ENCODE measurements at regions of chr6 and their contacts with region 1.

Region 1: GRCh38 chr6:32118782-32119628 is 9.0 kb downstream of the ATF6B start:
- DNase-seq: peak; percentile 84
- H3K4me3 ChIP-seq: no peak overlapping the region
- H3K27ac ChIP-seq: peak overlapping the region; percentile 47 to 52
- H3K4me1 ChIP-seq: no peaks in the 10 kb centered on the region
- H3K27me3 ChIP-seq: no peaks in the 10 kb centered on the region
- CTCF ChIP-seq: peak; percentile 63 to 96 (median 92)
- POLR2A ChIP-seq: no peak

Region 2: GRCh38 chr6:31615748-31616147 is 503.3 kb before region 1 on chr6:
- intact Hi-C with region 1: no loop called
- DNase-seq: no peak
- H3K4me3 ChIP-seq: no peak overlapping the region
- H3K27ac ChIP-seq: no peak overlapping the region
- H3K4me1 ChIP-seq: no peaks in the 10 kb centered on the region
- H3K27me3 ChIP-seq: no peaks in the 10 kb centered on the region
- CTCF ChIP-seq: no peak
- POLR2A ChIP-seq: no peak

Region 3: DNA sequence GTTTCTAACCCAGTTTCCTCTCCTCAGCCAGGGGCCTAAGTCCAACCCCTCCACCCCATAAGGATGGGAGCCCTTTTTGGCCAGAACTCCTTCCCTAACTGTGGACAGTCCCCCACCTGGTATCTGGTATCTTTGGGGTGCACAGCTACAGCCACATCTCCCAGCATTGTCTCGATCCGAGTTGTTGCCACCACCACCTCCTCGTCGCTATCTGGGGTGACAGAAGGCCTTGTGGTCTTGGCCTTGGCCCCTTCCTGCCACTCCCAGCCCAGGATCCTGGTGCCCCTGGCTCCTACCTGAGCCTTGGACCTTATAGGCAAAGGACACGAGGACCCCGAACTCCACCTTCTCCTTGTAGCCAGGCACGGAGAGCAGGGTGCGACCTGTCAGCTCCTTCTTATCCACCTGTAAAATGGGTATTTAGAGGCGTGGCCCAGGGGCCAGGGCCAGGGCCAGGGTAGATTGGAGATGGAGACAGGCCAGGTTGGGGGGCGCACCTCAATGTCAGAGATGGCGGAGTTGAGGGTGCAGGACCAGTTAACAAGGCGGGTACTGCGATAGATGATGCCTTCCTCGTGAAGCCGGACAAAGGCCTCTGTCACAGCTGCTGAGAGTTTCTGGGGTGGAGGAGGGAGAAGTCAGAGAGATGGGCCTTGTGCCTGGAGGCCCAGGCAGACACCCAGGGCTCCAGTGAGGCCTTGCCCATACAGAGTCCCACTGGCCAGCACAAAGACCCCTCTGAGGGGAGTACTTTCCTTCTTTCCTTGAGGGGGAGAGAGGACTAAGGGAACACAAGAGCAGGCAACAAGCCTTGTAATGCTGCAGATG is 334.7 kb before region 1 on chr6:
- intact Hi-C with region 1: no loop called
- DNase-seq: no peak
- H3K4me3 ChIP-seq: no peak overlapping the region
- H3K27ac ChIP-seq: no peak overlapping the region
- H3K4me1 ChIP-seq: no peaks in the 10 kb centered on the region
- H3K27me3 ChIP-seq: no peaks in the 10 kb centered on the region
- CTCF ChIP-seq: no peak
- POLR2A ChIP-seq: no peak

Region 4: DNA sequence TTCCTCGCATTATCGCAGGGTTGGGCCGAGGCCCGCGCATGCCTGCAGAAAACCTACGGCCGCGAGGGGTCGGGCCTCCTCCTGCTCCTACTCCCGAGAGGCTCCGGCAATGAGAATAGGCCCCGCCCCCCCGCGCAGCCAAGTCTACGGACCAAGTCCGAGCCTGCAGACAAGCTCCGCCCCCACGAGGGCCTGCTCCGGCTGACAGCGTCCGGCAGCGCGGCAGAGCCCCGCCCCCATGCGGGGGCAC is 76.6 kb after region 1 on chr6:
- intact Hi-C with region 1: loop called (anchors 2 kb)
- DNase-seq: peak; percentile 100
- H3K4me3 ChIP-seq: peak overlapping the region; percentile 57 to 63
- H3K27ac ChIP-seq: peak overlapping the region; percentile 99
- H3K4me1 ChIP-seq: no peaks in the 10 kb centered on the region
- H3K27me3 ChIP-seq: no peaks in the 10 kb centered on the region
- CTCF ChIP-seq: peak; percentile 44 to 95 (median 70)
- POLR2A ChIP-seq: no peak

Region 5: GRCh38 chr6:32212076-32212760 is 93.2 kb after region 1 on chr6:
- intact Hi-C with region 1: no loop called
- DNase-seq: no peak
- H3K4me3 ChIP-seq: no peak overlapping the region
- H3K27ac ChIP-seq: no peak overlapping the region
- H3K4me1 ChIP-seq: no peaks in the 10 kb centered on the region
- H3K27me3 ChIP-seq: no peaks in the 10 kb centered on the region
- CTCF ChIP-seq: no peak
- POLR2A ChIP-seq: no peak

Region 6: DNA sequence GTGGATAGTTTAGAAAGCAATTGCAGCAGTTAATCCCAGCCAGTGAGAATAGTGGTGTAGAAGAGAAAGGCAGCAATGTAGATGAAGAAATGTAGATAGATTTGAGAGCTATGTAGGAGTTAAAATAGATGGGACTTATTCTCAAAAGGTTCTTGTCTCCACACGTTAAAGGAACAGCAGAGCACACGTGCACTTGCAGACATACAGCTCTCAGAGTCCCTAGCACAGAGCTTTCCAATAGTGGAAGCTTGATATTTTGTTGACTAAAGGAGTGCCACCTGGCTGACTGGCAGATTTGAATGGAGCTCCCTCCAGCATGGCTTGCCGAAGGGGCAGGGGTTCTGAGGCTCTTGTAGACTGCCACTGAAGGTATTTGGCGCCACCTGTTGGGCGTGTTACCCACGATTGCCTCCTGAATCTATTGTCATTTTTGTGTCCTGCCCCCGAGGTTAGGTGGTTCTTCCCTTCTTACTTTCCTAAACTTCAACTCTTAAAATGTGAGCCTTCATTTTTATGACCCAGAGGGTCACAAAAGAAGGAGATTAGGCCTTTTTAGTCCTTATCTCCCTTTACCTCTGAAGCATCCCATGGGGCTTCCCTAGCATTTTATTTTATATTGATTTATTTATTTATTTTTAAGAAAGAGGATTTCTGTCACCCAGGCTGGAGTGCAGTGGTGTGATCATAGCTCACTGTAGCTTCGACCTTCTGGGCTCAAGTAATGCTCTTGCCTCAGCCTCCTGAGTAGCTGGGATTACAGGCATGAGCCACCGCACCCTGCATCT is 865.8 kb after region 1 on chr6:
- intact Hi-C with region 1: no loop called
- DNase-seq: peak; percentile 97
- H3K4me3 ChIP-seq: no peak overlapping the region
- H3K27ac ChIP-seq: peak overlapping the region; percentile 11 to 49
- H3K4me1 ChIP-seq: peaks cover 11% of the 10 kb centered on the region
- H3K27me3 ChIP-seq: no peaks in the 10 kb centered on the region
- CTCF ChIP-seq: peak; percentile 86 to 95 (median 92)
- POLR2A ChIP-seq: no peak

Measured in prostate gland (tissue), 2 donors.